Activated CD8-positive, alpha-beta T cell treated with anti-CD3 and anti-CD28 coated beads for 36 hours (primary cell): ENCODE measurements at regions of chr18 and their contacts with region 1.

Region 1: GRCh38 chr18:48951448-48952286 is 902 bp upstream of the SMAD7 start:
- DNase-seq: peak; percentile 77
- ATAC-seq: peak; percentile 48
- H3K4me3 Mint-ChIP-seq: peak overlapping the region; percentile 90
- H3K27ac Mint-ChIP-seq: peak overlapping the region; percentile 81
- H3K4me1 Mint-ChIP-seq: peaks cover 29% of the 10 kb centered on the region
- H3K27me3 Mint-ChIP-seq: no peaks in the 10 kb centered on the region
- CTCF ChIP-seq: no peak

Region 2: DNA sequence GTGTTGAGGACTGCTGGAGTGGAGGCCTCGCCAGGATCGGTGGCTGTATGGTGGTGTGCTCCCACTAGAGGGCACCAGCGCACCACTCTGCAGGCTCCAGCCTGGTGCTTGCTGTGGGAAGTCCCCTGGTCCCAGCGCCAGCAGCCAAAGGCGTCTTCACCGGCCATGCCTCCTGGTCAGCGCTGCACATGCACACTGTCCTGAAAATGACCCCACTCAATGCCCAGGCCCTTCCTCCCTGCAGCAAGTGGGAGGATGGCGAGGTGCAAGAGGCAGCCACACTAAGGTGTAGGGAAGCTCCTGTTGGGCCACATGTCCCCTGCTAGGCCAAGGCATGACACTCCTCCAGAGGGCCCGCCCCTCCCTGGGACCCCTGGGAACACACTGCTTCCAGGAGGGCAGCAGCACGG is 276.3 kb before region 1 on chr18:
- CTCF ChIA-PET with region 1: no interaction called
- POLR2A ChIA-PET with region 1: no interaction called
- intact Hi-C with region 1: no loop called
- DNase-seq: peak; percentile 88
- ATAC-seq: peak; percentile 96
- H3K4me3 Mint-ChIP-seq: no peak overlapping the region
- H3K27ac Mint-ChIP-seq: no peak overlapping the region
- H3K4me1 Mint-ChIP-seq: peaks cover 2% of the 10 kb centered on the region
- H3K27me3 Mint-ChIP-seq: no peaks in the 10 kb centered on the region
- CTCF ChIP-seq: peak; percentile 87

Region 3: GRCh38 chr18:48785091-48785614 is 166.5 kb before region 1 on chr18:
- CTCF ChIA-PET with region 1: interaction called, 3 read pairs
- POLR2A ChIA-PET with region 1: interaction called, 3 read pairs
- intact Hi-C with region 1: loop called (anchors 5 kb)
- DNase-seq: peak; percentile 52
- ATAC-seq: peak; percentile 71
- H3K4me3 Mint-ChIP-seq: no peak overlapping the region
- H3K27ac Mint-ChIP-seq: peak overlapping the region; percentile 63
- H3K4me1 Mint-ChIP-seq: peaks cover 15% of the 10 kb centered on the region
- H3K27me3 Mint-ChIP-seq: no peaks in the 10 kb centered on the region
- CTCF ChIP-seq: no peak

Region 4: DNA sequence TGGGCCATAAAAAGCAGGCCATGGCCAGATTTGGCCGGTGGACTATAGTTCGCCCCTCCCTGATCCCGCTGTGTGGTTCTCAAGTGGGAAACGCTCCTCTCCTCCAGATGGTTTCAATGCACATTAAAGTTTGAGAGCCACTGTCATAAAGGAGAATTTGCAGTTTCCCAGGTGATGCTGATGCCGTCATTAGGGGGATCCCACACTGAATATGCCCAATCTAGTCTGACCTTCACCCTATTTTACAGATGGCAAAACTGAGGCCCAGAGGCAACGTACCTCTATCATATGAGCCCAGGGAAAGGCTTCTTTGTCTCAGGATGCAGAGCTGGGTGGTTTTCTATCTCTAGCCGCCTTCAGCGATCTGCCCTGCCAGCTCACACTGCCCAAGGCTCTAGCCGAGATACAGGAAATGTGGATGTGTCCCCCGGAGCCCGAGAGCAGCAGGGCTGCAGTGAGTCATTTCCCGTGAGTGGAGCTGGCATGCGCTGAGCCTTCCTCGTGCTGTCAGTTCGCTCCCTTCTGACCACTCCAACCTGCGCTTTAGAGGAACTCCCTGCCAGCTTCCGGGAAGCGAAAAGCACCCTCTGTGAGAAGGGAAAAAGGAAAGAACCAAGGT is 117.1 kb before region 1 on chr18:
- CTCF ChIA-PET with region 1: no interaction called
- POLR2A ChIA-PET with region 1: interaction called, 14 read pairs
- intact Hi-C with region 1: loop called (anchors 10 kb)
- DNase-seq: peak; percentile 90
- ATAC-seq: peak; percentile 84
- H3K4me3 Mint-ChIP-seq: peak overlapping the region; percentile 80
- H3K27ac Mint-ChIP-seq: peak overlapping the region; percentile 96
- H3K4me1 Mint-ChIP-seq: peaks cover 84% of the 10 kb centered on the region
- H3K27me3 Mint-ChIP-seq: no peaks in the 10 kb centered on the region
- CTCF ChIP-seq: no peak

Region 5: DNA sequence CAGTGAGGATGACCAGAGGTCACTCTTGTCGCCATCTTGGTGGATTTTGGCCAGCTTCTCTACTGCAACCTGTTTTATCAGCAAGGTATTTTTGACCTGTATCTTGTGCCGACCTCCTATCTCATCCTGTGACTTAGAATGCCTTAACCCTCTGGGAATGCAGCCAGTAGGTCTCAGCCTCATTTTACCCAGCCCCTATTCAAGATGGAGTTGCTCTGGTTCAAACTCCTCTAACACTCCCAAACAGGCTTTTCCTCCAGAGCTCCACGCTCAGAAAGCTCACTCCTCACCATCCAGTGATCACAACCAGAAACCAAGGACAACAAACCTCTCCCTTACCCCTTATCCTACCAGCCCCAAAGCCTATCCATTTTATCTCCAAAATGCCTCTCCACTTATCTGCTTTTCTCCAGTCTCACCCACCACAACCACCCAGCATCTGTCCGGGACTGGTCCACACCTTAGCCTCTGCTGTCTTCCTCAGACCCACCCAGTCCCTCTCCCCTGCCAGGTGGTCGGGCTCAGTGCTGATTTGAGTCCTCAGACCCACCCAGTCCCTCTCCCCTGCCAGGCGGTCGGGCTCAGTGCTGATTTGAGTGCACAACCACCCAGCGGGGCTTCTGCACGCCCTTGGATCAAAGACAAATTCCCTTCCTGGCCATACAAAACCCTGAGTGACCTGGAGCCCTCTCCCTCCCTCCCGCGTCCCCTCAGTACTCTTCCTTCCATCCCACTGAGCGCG is 10.8 kb after region 1 on chr18:
- CTCF ChIA-PET with region 1: no interaction called
- POLR2A ChIA-PET with region 1: no interaction called
- intact Hi-C with region 1: no loop called
- DNase-seq: no peak
- ATAC-seq: no peak
- H3K4me3 Mint-ChIP-seq: no peak overlapping the region
- H3K27ac Mint-ChIP-seq: peak overlapping the region; percentile 8
- H3K4me1 Mint-ChIP-seq: peaks cover 13% of the 10 kb centered on the region
- H3K27me3 Mint-ChIP-seq: peaks cover 4% of the 10 kb centered on the region
- CTCF ChIP-seq: no peak

Region 6: DNA sequence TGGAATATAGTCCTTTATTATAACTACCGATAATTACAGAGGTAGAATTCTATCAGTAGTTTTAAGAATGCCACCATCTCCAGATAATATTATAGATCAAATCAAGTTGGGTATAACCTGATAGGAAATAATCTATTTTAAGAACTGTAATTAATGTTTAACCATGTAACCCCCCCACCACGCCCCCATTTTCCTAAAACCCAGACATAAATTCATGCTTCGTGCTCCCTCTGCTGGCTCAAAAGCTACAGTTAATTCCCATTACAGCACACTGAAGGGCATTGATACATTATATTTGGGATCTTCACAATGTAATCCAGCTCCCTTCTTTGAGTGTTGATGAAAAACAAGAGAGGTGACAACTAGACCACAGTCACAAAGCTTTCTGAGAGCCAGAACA is 227.1 kb after region 1 on chr18:
- CTCF ChIA-PET with region 1: no interaction called
- POLR2A ChIA-PET with region 1: no interaction called
- intact Hi-C with region 1: loop called (anchors 10 kb)
- DNase-seq: peak; percentile 35
- ATAC-seq: no peak
- H3K4me3 Mint-ChIP-seq: no peak overlapping the region
- H3K27ac Mint-ChIP-seq: no peak overlapping the region
- H3K4me1 Mint-ChIP-seq: peaks cover 26% of the 10 kb centered on the region
- H3K27me3 Mint-ChIP-seq: no peaks in the 10 kb centered on the region
- CTCF ChIP-seq: peak; percentile 66

Region 7: DNA sequence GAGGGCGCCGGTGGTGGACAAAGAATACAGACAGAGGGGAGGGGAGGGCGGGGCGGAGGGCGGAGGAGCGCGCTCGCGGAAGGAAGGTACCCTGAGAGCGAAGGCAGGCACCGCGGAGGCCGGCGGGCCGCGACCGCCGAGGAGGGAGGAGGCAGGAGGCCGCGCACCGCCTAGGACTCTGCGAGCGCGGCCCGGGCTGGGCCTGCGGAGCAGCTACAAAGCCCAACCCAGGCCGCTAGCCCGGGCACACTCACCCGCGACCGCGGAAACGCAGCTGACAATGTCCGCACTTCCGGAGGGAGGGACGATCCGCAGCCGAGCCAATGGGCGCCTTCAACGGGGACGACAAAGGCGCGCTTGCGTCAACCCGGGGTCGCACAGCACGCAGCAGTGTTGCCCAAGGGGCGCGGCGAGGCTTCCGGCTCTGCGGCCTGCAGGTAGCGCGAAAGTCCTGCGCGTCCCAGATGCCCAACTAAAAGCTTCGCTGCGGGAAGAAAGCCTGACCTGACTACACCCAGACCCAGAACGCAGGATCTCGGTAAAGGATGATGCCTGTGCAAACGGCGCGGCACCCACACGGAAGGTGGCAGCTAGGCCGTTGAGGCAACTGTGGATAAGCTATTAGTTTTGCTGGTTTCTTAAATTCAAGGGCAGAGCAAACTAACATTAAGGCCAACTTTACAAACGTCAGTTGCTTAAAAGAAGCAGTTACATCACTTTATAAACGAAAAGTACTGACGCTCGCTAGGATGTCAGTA is 535.5 kb after region 1 on chr18 and contains the start of gene C18orf32:
- CTCF ChIA-PET with region 1: no interaction called
- POLR2A ChIA-PET with region 1: no interaction called
- intact Hi-C with region 1: no loop called
- DNase-seq: peak; percentile 96
- ATAC-seq: peak; percentile 93
- H3K4me3 Mint-ChIP-seq: peak within 1 kb of the TSS; percentile 94
- H3K27ac Mint-ChIP-seq: peak within 1 kb of the TSS; percentile 98
- H3K4me1 Mint-ChIP-seq: peaks cover 49% of the 10 kb centered on the region
- H3K27me3 Mint-ChIP-seq: no peaks in the 10 kb centered on the region
- CTCF ChIP-seq: no peak
- total RNA-seq, gene C18orf32: 21.7 to 22.4 TPM